ENCODE measurements at regions of chr20 and their contacts with region 1.

Region 1: GRCh38 chr20:54219751-54220426 is 12.0 kb downstream of the PFDN4 start:
- DNase-seq: peak; percentile 47
- H3K4me3 Mint-ChIP-seq: no peak overlapping the region
- H3K27ac Mint-ChIP-seq: no peak overlapping the region
- H3K4me1 Mint-ChIP-seq: no peaks in the 10 kb centered on the region
- H3K27me3 Mint-ChIP-seq: no peaks in the 10 kb centered on the region
- CTCF ChIP-seq: peak; percentile 80

Region 2: GRCh38 chr20:54038221-54038620 is 181.7 kb before region 1 on chr20:
- CTCF ChIA-PET with region 1: no interaction called
- intact Hi-C with region 1: no loop called
- DNase-seq: no peak
- H3K4me3 Mint-ChIP-seq: no peak overlapping the region
- H3K27ac Mint-ChIP-seq: no peak overlapping the region
- H3K4me1 Mint-ChIP-seq: no peaks in the 10 kb centered on the region
- H3K27me3 Mint-ChIP-seq: peaks cover 45% of the 10 kb centered on the region
- CTCF ChIP-seq: no peak

Region 3: GRCh38 chr20:54048481-54048880 is 171.4 kb before region 1 on chr20:
- CTCF ChIA-PET with region 1: interaction called, 10 read pairs
- intact Hi-C with region 1: no loop called
- DNase-seq: no peak
- H3K4me3 Mint-ChIP-seq: no peak overlapping the region
- H3K27ac Mint-ChIP-seq: no peak overlapping the region
- H3K4me1 Mint-ChIP-seq: no peaks in the 10 kb centered on the region
- H3K27me3 Mint-ChIP-seq: peaks cover 22% of the 10 kb centered on the region
- CTCF ChIP-seq: no peak

Region 4: DNA sequence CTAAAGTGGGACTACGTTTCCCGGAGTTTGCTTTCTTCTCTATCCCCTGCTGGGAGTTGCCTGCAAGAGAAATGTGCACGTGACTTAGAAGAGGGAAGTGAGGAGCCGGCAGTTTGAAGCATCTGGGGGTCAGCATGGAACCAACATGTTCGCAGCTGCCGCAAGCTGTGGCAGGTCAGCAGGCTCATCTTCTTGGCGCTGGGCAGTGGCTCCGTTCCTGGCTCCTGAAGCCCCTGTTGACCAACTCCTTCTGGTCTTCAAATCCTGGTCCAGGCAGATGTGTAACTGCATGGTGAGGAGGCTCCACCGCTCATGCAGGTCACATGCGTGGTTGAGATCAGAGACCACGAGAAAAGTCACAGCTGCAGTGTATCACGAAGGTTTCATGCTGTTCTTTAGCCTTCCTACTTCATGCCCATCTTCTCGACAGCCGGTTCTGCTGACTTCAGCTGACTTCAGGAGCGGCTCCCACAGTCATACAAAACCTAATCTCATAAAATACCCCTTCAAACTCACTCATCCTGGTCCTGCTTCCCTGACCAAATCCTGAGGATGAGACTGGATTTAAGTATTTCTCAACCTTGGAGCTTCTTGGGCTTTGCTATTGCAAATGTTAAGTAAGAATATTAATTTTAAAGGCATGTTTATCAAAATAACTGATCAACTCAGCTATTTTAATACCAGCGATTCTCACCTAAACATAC is 104.6 kb before region 1 on chr20:
- CTCF ChIA-PET with region 1: no interaction called
- intact Hi-C with region 1: no loop called
- DNase-seq: no peak
- H3K4me3 Mint-ChIP-seq: peak overlapping the region; percentile 1
- H3K27ac Mint-ChIP-seq: peak overlapping the region; percentile 96
- H3K4me1 Mint-ChIP-seq: peaks cover 91% of the 10 kb centered on the region
- H3K27me3 Mint-ChIP-seq: no peaks in the 10 kb centered on the region
- CTCF ChIP-seq: no peak

Region 5: GRCh38 chr20:54276577-54277194 is 56.8 kb after region 1 on chr20:
- CTCF ChIA-PET with region 1: no interaction called
- intact Hi-C with region 1: loop called (anchors 1 kb)
- DNase-seq: peak; percentile 55
- H3K4me3 Mint-ChIP-seq: peak overlapping the region; percentile 42
- H3K27ac Mint-ChIP-seq: peak overlapping the region; percentile 79
- H3K4me1 Mint-ChIP-seq: peaks cover 50% of the 10 kb centered on the region
- H3K27me3 Mint-ChIP-seq: no peaks in the 10 kb centered on the region
- CTCF ChIP-seq: no peak

Region 6: DNA sequence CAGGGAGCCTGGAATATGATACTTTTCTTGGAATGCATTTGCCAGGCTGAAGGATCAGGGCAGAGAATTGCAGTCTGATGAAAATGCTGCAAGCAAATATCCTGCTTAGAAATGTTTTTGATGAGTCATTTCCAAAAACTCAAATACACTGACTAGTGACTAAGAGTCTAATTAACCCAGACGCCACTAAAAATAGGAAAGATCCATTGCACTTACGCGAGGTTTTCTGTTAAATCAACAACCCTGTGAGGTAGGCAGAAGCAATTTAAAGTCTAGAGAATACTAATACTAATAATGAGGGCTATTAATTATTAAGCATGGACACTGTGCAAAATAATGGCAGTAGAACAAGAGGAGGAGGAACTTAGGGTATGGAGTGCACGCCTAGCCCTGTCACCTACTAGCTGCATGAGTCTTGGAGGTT is 125.4 kb after region 1 on chr20:
- CTCF ChIA-PET with region 1: no interaction called
- intact Hi-C with region 1: loop called (anchors 5 kb)
- DNase-seq: peak; percentile 16
- H3K4me3 Mint-ChIP-seq: peak overlapping the region; percentile 9
- H3K27ac Mint-ChIP-seq: peak overlapping the region; percentile 55
- H3K4me1 Mint-ChIP-seq: peaks cover 65% of the 10 kb centered on the region
- H3K27me3 Mint-ChIP-seq: no peaks in the 10 kb centered on the region
- CTCF ChIP-seq: no peak

Region 7: DNA sequence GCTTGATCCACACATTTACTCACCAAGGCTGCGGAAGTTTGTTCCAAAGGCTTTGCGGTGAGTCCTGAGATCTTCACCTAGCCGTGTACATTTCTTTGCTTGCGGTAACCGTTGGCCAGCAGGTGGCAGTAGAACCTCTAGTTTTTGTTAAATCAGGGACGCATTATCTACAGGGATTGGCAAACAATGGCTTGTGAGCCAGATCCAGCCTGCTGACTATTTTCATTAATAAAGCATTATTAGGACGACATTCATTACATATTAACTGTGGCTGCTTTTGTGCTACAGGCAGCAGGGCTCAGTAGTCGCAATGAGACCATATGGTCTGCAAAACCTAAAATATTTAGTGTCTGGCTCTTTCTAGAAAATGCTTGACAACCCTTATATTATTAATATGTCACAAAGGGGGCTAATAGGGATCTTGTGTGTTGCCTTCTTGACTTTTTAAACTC is 429.6 kb after region 1 on chr20:
- CTCF ChIA-PET with region 1: interaction called, 6 read pairs
- intact Hi-C with region 1: loop called (anchors 1 kb)
- DNase-seq: peak; percentile 92
- H3K4me3 Mint-ChIP-seq: no peak overlapping the region
- H3K27ac Mint-ChIP-seq: no peak overlapping the region
- H3K4me1 Mint-ChIP-seq: peaks cover 8% of the 10 kb centered on the region
- H3K27me3 Mint-ChIP-seq: peaks cover 56% of the 10 kb centered on the region
- CTCF ChIP-seq: peak; percentile 88

Measured in Calu3 (cell line).